Right lobe of liver (tissue), 6 donors: ENCODE measurements at regions of chr4 and their contacts with region 1.

Region 1: DNA sequence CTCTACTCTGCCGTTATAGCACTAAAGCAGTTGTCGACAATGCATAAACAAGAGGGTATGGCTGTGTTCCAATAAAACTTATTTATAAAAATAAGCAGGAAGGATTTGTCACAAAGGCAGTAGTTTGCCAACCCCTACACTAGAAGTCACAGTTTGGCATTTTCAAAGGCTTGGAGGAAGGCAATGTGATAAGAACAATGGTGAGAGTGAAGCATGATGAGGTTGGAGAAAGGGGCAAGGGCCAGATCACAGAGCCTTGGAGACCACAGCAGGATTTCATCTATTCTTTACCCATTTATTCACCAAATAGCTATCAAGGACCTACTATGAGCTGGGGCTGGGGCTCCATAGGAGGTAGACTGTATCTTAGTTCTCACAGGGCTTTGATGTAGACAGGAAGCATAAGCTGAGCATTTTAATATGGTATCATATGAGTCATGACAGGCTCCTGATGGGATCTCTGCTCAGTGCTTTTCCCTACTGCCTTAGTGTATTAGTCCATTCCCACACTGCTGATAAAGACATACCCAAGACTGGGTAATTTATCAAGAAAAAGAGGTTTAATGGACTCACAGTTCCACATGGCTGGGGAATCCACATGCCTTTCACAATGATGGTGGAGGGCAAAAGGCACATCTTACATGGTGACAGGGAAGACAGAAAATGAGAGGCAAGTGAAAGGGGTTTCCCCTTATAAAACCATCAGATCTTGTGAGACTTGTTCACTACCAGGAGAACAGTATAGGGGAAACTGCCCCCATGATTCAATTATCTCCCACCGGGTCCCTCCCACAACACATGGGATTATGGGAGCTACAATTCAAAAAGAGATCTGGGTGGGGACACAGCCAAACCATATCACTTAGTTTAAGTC is 58.9 kb downstream of the PPM1K start:
- DNase-seq: no peak
- ATAC-seq: peak; percentile 24 to 66 (median 48)
- H3K4me3 ChIP-seq: no peak overlapping the region
- H3K27ac ChIP-seq: no peak overlapping the region
- H3K4me1 ChIP-seq: no peaks in the 10 kb centered on the region
- H3K27me3 ChIP-seq: no peaks in the 10 kb centered on the region
- CTCF ChIP-seq: no peak
- POLR2A ChIP-seq: no peak

Region 2: DNA sequence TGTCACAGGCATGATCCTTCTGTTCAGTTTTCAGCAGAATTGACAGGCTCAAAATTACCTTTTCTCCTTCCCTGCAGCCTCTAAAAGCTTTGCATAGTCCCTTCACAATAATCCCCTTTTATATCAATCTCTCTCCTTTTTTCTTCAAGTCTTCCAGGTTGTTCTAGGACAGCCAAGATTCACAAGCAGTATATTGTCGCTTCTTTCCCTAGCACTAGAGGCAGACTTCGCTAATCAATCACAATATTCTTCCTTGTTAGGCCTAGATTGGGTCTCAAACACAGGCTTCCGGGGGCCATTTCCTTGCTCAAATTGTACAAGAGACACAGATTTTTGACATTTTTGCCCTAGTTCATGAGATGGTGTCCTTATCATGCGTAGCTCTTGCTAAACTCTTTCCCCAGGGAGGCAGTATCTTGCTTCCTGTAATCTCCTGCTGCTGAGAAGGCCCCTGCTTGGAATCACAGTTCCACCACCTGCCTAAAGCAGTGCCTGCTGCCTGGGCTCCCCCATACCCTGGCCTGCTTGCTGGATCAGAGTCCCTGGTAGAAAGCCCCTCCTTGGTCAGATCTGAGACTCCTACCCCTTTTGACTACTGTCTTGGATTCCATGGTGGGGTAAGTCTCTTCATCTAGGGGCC is 518.1 kb before region 1 on chr4:
- intact Hi-C with region 1: no loop called
- DNase-seq: no peak
- ATAC-seq: no peak
- H3K4me3 ChIP-seq: no peak overlapping the region
- H3K27ac ChIP-seq: no peak overlapping the region
- H3K4me1 ChIP-seq: no peaks in the 10 kb centered on the region
- H3K27me3 ChIP-seq: no peaks in the 10 kb centered on the region
- CTCF ChIP-seq: no peak
- POLR2A ChIP-seq: no peak

Region 3: GRCh38 chr4:88308587-88308986 is 83.1 kb after region 1 on chr4:
- intact Hi-C with region 1: no loop called
- DNase-seq: no peak
- ATAC-seq: no peak
- H3K4me3 ChIP-seq: no peak overlapping the region
- H3K27ac ChIP-seq: no peak overlapping the region
- H3K4me1 ChIP-seq: no peaks in the 10 kb centered on the region
- H3K27me3 ChIP-seq: no peaks in the 10 kb centered on the region
- CTCF ChIP-seq: no peak
- POLR2A ChIP-seq: no peak

Region 4: DNA sequence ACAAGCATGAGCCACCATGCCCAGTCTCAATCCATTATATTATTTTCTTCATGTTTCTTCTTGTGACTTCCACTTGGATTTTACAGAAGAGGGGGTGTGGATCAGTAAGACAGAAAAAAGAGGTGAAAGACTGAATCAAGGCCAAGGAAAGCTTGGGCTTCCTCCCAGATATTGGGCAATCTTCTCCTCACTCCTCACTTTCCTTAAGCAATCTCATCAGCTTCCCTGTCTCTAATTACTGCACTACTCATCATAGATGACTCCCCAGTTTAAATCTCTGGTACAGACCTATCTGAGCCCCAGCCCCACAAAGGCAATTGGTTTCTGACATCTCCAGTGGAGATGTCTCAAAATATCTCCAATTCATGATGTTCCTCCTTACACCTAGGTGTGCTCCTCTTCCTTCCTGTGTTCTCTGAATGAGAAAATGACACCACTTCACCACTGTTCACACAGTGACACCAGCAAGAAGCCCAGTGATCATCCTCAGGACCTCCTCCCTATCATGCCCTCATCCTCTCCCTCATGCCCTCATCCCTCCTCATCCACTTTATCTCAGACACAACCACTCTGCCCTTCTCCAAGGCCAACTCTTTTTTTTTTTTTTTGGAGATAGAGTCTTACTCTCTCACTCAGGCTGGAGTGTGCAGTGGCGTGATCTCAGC is 108.4 kb after region 1 on chr4:
- intact Hi-C with region 1: no loop called
- DNase-seq: no peak
- ATAC-seq: no peak
- H3K4me3 ChIP-seq: no peak overlapping the region
- H3K27ac ChIP-seq: no peak overlapping the region
- H3K4me1 ChIP-seq: peaks cover 0 to 10% (median 4%) of the 10 kb centered on the region in 4 donors
- H3K27me3 ChIP-seq: no peaks in the 10 kb centered on the region
- CTCF ChIP-seq: no peak
- POLR2A ChIP-seq: no peak

Region 5: DNA sequence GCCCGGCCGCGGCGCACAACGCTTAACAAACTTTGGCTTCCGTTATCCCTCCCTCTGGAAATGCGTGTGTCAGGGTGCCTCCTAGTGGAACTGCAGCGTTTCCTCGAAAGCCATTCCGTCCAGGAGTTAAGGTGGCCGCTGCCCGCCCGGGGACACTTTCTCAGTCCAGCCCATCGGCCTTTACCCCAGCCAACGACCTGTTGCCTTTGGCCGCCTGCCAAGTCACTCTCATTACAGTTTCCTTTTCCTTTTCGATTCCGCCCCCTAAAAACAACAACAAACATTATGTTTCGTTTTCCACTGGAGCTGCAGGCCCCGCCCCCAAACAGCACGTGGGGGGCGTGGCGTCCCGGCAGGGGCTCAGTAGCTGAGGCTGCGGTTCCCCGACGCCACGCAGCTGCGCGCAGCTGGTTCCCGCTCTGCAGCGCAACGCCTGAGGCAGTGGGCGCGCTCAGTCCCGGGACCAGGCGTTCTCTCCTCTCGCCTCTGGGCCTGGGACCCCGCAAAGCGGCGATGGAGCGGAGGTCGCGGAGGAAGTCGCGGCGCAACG is 231.4 kb after region 1 on chr4 and contains the start of gene HERC5:
- intact Hi-C with region 1: loop called in 1 of 2 experiments (anchors 10 kb)
- DNase-seq: peak; percentile 97 to 98 (median 97)
- ATAC-seq: peak; percentile 95 to 98 (median 97)
- H3K4me3 ChIP-seq: peak within 1 kb of the TSS; percentile 60 to 78 (median 74)
- H3K27ac ChIP-seq: peak within 1 kb of the TSS; percentile 49 to 77 (median 66)
- H3K4me1 ChIP-seq: no peaks in the 10 kb centered on the region
- H3K27me3 ChIP-seq: no peaks in the 10 kb centered on the region
- CTCF ChIP-seq: peak; percentile 56 to 74 (median 71)
- POLR2A ChIP-seq: peak; percentile 66
- total RNA-seq, gene HERC5: 1.5 to 5.8 (median 1.8) TPM